GM12878 (cell line): ENCODE measurements at regions of chr17 and their contacts with region 1.

Region 1: GRCh38 chr17:39863918-39864746 is at the start of gene IKZF3:
- DNase-seq: no peak
- ATAC-seq: peak; percentile 57
- H3K4me3 ChIP-seq: peak within 1 kb of the TSS; percentile 78
- H3K27ac ChIP-seq: peak within 1 kb of the TSS; percentile 100
- H3K4me1 ChIP-seq: peaks cover 35% of the 10 kb centered on the region
- H3K27me3 ChIP-seq: no peaks in the 10 kb centered on the region
- CTCF ChIP-seq: peak; percentile 53 to 85 (median 59); a peak in 5 of 6 replicates
- EP300 ChIP-seq: peak; percentile 20 to 34; a peak in 1 of 4 replicates
- POLR2A ChIP-seq: peak; percentile 89
- RAD21 ChIP-seq: peak; percentile 77
- polyA plus RNA-seq, gene IKZF3: 5.5 to 14.0 TPM

Region 2: GRCh38 chr17:39777534-39778365 is 86.4 kb before region 1 on chr17:
- CTCF ChIA-PET with region 1: interaction called, 9 read pairs
- POLR2A ChIA-PET with region 1: interaction called, 81 read pairs
- RAD21 ChIA-PET with region 1: interaction called, 64 read pairs
- SMC1A ChIA-PET with region 1: interaction called, 59 read pairs
- in situ Hi-C with region 1: no loop called
- intact Hi-C with region 1: loop called (anchors 5 kb)
- DNase-seq: peak; percentile 73
- ATAC-seq: peak; percentile 68
- H3K4me3 ChIP-seq: peak overlapping the region; percentile 79
- H3K27ac ChIP-seq: peak overlapping the region; percentile 95
- H3K4me1 ChIP-seq: peaks cover 44% of the 10 kb centered on the region
- H3K27me3 ChIP-seq: no peaks in the 10 kb centered on the region
- CTCF ChIP-seq: no peak
- EP300 ChIP-seq: peak; percentile 40 to 58; a peak in 2 of 4 replicates
- POLR2A ChIP-seq: peak; percentile 43; the same call in 1 of the 2 replicates
- RAD21 ChIP-seq: no peak

Region 3: DNA sequence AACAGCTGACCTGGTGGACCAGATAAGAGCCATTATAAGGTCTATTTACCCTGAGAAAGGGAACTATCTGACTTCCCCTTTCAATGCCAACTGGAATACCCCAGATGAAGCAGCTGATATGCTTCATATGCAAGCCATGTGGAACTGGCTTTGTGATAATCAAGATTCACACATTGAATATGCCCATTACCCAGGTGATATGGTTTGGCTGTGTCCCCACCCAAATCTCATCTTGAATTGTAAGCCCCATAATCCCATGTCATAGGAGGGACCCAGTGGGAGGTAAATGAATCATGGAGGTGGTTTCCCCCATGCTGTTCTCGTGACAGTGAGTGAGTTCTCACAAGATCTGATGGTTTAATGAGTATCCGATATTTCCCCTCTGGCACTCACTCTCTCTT is 42.1 kb before region 1 on chr17:
- CTCF ChIA-PET with region 1: interaction called, 17 read pairs
- POLR2A ChIA-PET with region 1: interaction called, 3 read pairs
- RAD21 ChIA-PET with region 1: interaction called, 49 read pairs
- SMC1A ChIA-PET with region 1: interaction called, 28 read pairs
- in situ Hi-C with region 1: no loop called
- intact Hi-C with region 1: no loop called
- DNase-seq: no peak
- ATAC-seq: peak; percentile 25
- H3K4me3 ChIP-seq: no peak overlapping the region
- H3K27ac ChIP-seq: peak overlapping the region; percentile 65
- H3K4me1 ChIP-seq: peaks cover 42% of the 10 kb centered on the region
- H3K27me3 ChIP-seq: no peaks in the 10 kb centered on the region
- CTCF ChIP-seq: no peak
- EP300 ChIP-seq: no peak
- POLR2A ChIP-seq: no peak
- RAD21 ChIP-seq: no peak

Region 4: GRCh38 chr17:39852239-39852638 is 11.9 kb before region 1 on chr17:
- CTCF ChIA-PET with region 1: interaction called, 8 read pairs
- POLR2A ChIA-PET with region 1: interaction called, 6 read pairs
- RAD21 ChIA-PET with region 1: interaction called, 40 read pairs
- SMC1A ChIA-PET with region 1: interaction called, 29 read pairs
- in situ Hi-C with region 1: no loop called
- intact Hi-C with region 1: no loop called
- DNase-seq: no peak
- ATAC-seq: peak; percentile 66
- H3K4me3 ChIP-seq: peak overlapping the region; percentile 54
- H3K27ac ChIP-seq: peak overlapping the region; percentile 51
- H3K4me1 ChIP-seq: peaks cover 47% of the 10 kb centered on the region
- H3K27me3 ChIP-seq: no peaks in the 10 kb centered on the region
- CTCF ChIP-seq: no peak
- EP300 ChIP-seq: no peak
- POLR2A ChIP-seq: no peak
- RAD21 ChIP-seq: no peak

Region 5: GRCh38 chr17:39980351-39981206 is 116.4 kb after region 1 on chr17 and contains the start of gene PSMD3:
- CTCF ChIA-PET with region 1: interaction called, 7 read pairs
- POLR2A ChIA-PET with region 1: interaction called, 3 read pairs
- RAD21 ChIA-PET with region 1: interaction called, 5 read pairs
- SMC1A ChIA-PET with region 1: interaction called, 8 read pairs
- in situ Hi-C with region 1: no loop called
- intact Hi-C with region 1: loop called (anchors 2 kb)
- DNase-seq: peak; percentile 100
- ATAC-seq: peak; percentile 94
- H3K4me3 ChIP-seq: peak within 1 kb of the TSS; percentile 90
- H3K27ac ChIP-seq: peak within 1 kb of the TSS; percentile 90
- H3K4me1 ChIP-seq: peaks cover 6% of the 10 kb centered on the region
- H3K27me3 ChIP-seq: no peaks in the 10 kb centered on the region; a peak in 1 of 4 replicates
- CTCF ChIP-seq: peak; percentile 80 to 97 (median 92)
- EP300 ChIP-seq: peak; percentile 21 to 44; a peak in 1 of 4 replicates
- POLR2A ChIP-seq: peak; percentile 93
- RAD21 ChIP-seq: peak; percentile 92
- polyA plus RNA-seq, gene PSMD3: 2.2 to 2.6 TPM